ENCODE measurements at regions of chr2 and their contacts with region 1.

Region 1: GRCh38 chr2:220619558-220620217 is 952.4 kb downstream of the EPHA4 start:
- DNase-seq: peak; percentile 96
- ATAC-seq: peak; percentile 90
- H3K4me3 ChIP-seq: peak overlapping the region; percentile 34; the same call in 1 of the 2 replicates
- H3K27ac ChIP-seq: peak overlapping the region; percentile 99
- H3K4me1 ChIP-seq: peaks cover 31% of the 10 kb centered on the region
- H3K27me3 ChIP-seq: no peaks in the 10 kb centered on the region
- CTCF ChIP-seq: no peak

Region 2: GRCh38 chr2:220188031-220188430 is 431.7 kb before region 1 on chr2:
- CTCF ChIA-PET with region 1: no interaction called
- POLR2A ChIA-PET with region 1: no interaction called
- intact Hi-C with region 1: loop called (anchors 5 kb)
- DNase-seq: peak; percentile 98
- ATAC-seq: peak; percentile 78
- H3K4me3 ChIP-seq: no peak overlapping the region
- H3K27ac ChIP-seq: peak overlapping the region; percentile 87
- H3K4me1 ChIP-seq: peaks cover 25% of the 10 kb centered on the region
- H3K27me3 ChIP-seq: no peaks in the 10 kb centered on the region
- CTCF ChIP-seq: no peak

Region 3: DNA sequence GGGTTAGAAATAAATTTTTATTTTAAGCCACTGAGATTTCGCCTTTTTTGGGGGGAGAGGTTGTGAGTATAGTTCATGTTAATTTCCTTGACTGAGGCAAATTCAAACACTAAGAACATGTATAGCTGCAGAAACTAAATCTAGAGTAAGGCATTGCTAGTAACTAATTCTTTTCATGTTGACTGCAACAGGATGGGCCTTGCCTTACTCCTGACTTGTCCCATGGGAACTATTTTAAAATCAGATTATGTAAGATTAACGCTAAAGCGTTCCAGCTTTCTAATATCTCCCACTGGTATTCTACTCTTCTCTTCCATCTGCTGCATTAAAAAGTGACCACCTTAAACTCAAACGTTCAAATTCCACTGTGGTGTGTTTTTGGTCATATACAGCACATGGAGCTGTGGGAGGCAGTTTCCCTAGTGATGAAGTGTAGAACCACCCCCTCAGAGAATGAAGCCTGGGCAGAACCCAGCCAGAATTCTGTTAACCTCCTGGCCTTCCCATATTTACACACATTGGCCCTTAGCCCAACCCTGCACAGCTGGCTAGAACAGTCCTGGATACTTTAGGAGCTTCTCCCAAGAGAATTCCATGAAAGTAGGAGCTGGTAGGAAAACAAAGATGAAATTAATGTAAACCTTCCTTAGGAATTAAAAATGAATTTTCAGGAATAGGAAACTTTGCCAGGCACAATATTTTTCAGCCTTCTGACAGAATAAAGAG is 304.4 kb before region 1 on chr2:
- CTCF ChIA-PET with region 1: no interaction called
- POLR2A ChIA-PET with region 1: no interaction called
- intact Hi-C with region 1: loop called (anchors 10 kb)
- DNase-seq: no peak
- ATAC-seq: no peak
- H3K4me3 ChIP-seq: no peak overlapping the region
- H3K27ac ChIP-seq: no peak overlapping the region
- H3K4me1 ChIP-seq: peaks cover 28% of the 10 kb centered on the region
- H3K27me3 ChIP-seq: no peaks in the 10 kb centered on the region
- CTCF ChIP-seq: no peak

Region 4: GRCh38 chr2:220504938-220505503 is 114.7 kb before region 1 on chr2:
- CTCF ChIA-PET with region 1: no interaction called
- POLR2A ChIA-PET with region 1: no interaction called
- intact Hi-C with region 1: loop called (anchors 2 kb)
- DNase-seq: peak; percentile 86
- ATAC-seq: peak; percentile 85
- H3K4me3 ChIP-seq: no peak overlapping the region
- H3K27ac ChIP-seq: peak overlapping the region; percentile 68
- H3K4me1 ChIP-seq: peaks cover 50% of the 10 kb centered on the region
- H3K27me3 ChIP-seq: no peaks in the 10 kb centered on the region
- CTCF ChIP-seq: no peak

Region 5: GRCh38 chr2:220512419-220512818 is 107.3 kb before region 1 on chr2:
- CTCF ChIA-PET with region 1: interaction called, 6 read pairs
- POLR2A ChIA-PET with region 1: no interaction called
- intact Hi-C with region 1: loop called (anchors 2 kb)
- DNase-seq: peak; percentile 74
- ATAC-seq: peak; percentile 30; the same call in 1 of the 2 replicates
- H3K4me3 ChIP-seq: peak overlapping the region; percentile 25; the same call in 1 of the 2 replicates
- H3K27ac ChIP-seq: peak overlapping the region; percentile 76
- H3K4me1 ChIP-seq: peaks cover 48% of the 10 kb centered on the region
- H3K27me3 ChIP-seq: no peaks in the 10 kb centered on the region
- CTCF ChIP-seq: no peak

Region 6: GRCh38 chr2:220753486-220753885 is 133.8 kb after region 1 on chr2:
- CTCF ChIA-PET with region 1: no interaction called
- POLR2A ChIA-PET with region 1: no interaction called
- intact Hi-C with region 1: no loop called
- DNase-seq: no peak
- ATAC-seq: no peak
- H3K4me3 ChIP-seq: no peak overlapping the region
- H3K27ac ChIP-seq: no peak overlapping the region
- H3K4me1 ChIP-seq: no peaks in the 10 kb centered on the region
- H3K27me3 ChIP-seq: no peaks in the 10 kb centered on the region
- CTCF ChIP-seq: no peak

Measured in PC-3 (cell line).